PC-3 (cell line): ENCODE measurements at regions of chrX and their contacts with region 1.

Region 1: DNA sequence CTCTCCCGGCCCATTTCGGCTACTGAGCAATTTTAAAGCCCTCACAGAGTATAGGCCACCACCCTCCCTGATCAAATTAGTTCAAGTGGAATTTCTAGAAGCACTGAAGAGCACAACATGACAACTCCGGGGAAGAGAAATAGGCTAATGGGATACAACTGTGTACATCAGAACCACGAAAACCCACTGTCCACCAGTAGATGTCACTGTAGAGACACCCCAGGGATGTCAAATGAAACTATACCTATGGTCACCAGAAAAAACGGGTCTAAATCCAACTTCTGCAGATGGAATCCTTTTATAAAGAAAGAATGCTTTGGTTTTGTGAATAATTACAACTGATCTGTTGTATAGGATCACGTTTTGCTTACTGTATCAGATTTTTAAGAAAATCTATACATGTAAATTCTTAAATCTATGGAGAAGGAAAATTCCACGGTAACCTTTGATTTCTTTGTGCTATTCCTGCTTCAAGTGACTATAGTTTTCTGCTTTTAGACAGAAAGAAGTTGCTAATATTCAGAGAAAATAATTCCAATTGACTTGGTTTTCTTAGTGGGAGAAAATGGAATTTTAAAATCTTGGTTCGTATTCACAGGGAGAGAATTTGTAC is 29.5 kb upstream of the MAP3K15 start:
- DNase-seq: peak; percentile 76
- ATAC-seq: peak; percentile 86
- H3K4me3 ChIP-seq: no peak overlapping the region
- H3K27ac ChIP-seq: no peak overlapping the region
- H3K4me1 ChIP-seq: no peaks in the 10 kb centered on the region
- H3K27me3 ChIP-seq: no peaks in the 10 kb centered on the region
- CTCF ChIP-seq: peak; percentile 78

Region 2: GRCh38 chrX:19887911-19888879 is 343.4 kb after region 1 on chrX:
- CTCF ChIA-PET with region 1: no interaction called
- POLR2A ChIA-PET with region 1: no interaction called
- intact Hi-C with region 1: loop called (anchors 1 kb)
- DNase-seq: peak; percentile 80
- ATAC-seq: peak; percentile 79
- H3K4me3 ChIP-seq: peak overlapping the region; percentile 73
- H3K27ac ChIP-seq: peak overlapping the region; percentile 77
- H3K4me1 ChIP-seq: peaks cover 30% of the 10 kb centered on the region
- H3K27me3 ChIP-seq: no peaks in the 10 kb centered on the region
- CTCF ChIP-seq: peak; percentile 75